ENCODE measurements at regions of chr2 and their contacts with region 1.

Region 1: DNA sequence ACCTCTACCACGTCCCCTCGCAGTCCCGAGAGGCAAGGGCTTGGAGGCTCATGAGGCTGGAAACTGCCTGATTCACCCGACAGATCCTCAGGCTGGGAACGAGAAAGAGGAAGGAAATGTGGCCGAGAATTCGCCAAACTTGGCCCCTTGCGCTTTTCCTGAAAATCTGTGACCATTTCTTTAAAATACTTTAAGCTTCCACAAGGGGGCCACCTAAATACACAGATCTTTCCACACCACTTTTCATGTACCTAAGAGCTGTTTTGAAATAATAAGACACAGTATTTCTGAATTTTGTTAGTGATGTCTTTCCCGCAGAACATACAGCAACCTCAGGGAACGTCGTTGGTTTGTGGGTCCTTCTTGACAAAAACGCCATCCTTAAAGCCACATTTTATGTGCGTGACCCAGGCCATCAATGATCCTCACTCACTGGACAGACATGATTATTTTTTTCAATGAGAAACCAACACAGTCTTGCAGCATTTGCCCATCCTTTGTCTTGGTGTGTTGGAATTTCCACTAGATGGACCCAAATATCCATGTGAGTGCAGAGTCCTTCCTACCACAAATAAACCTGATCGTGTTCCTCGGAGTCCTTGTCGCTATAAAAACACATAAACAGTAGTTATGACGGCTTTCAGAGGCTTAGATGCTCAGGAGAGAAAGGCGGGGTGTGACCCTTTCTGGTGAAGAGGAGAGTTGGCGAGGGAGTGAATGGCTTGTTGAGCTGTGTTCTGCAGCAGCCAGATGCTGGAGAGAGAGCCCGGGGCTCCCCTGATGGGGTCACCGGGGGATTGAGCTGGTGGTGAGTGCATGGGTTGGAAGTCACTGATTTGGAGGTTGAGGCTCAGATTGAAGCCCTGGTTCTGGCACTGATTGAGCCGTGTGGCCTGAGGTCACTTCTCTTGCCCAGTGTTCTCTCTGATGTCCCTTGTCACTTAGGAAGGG is 25.0 kb downstream of the DCDC2C start:
- DNase-seq: peak; percentile 62
- H3K4me3 Mint-ChIP-seq: no peak overlapping the region
- H3K27ac Mint-ChIP-seq: no peak overlapping the region
- H3K4me1 Mint-ChIP-seq: peaks cover 12% of the 10 kb centered on the region
- H3K27me3 Mint-ChIP-seq: peaks cover 43% of the 10 kb centered on the region
- CTCF ChIP-seq: peak; percentile 51

Region 2: DNA sequence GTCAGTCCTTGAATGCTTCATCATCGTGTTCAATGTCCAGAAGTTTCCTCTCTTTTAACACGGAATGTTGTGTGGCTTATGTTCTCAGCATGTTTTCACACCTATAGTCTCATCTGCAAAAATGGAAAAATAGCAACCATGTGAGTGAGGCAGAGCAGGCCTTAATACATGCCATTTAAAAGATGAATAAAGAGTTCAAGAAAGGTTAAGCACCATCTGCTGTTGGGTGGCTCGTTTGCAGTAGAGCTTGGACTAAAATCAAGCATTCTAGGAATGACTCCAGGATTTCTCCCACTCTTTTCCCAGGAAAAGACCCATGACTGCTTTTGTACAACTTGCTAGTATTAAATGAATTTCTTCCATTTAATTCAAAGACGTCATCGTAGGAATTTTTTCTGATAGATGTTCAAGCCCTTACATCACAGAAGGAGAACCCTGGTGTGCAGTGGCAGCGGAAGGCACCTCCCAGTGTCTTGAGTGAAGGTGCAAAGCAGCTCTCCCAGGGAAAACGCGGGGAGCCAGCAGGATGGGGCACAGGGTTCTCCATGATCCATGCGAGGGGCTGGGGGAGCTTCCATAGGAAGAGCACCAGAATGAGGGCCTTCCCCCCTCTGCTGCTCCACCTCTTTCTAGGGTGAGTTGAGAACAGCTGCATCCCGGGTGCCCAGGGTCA is 15.4 kb before region 1 on chr2:
- CTCF ChIA-PET with region 1: interaction called, 29 read pairs
- POLR2A ChIA-PET with region 1: no interaction called
- intact Hi-C with region 1: no loop called
- DNase-seq: no peak
- H3K4me3 Mint-ChIP-seq: no peak overlapping the region
- H3K27ac Mint-ChIP-seq: no peak overlapping the region
- H3K4me1 Mint-ChIP-seq: peaks cover 14% of the 10 kb centered on the region
- H3K27me3 Mint-ChIP-seq: no peaks in the 10 kb centered on the region
- CTCF ChIP-seq: no peak

Region 3: GRCh38 chr2:3759761-3760160 is 31.4 kb after region 1 on chr2:
- CTCF ChIA-PET with region 1: no interaction called
- POLR2A ChIA-PET with region 1: no interaction called
- intact Hi-C with region 1: no loop called
- DNase-seq: no peak
- H3K4me3 Mint-ChIP-seq: no peak overlapping the region
- H3K27ac Mint-ChIP-seq: no peak overlapping the region
- H3K4me1 Mint-ChIP-seq: peaks cover 12% of the 10 kb centered on the region
- H3K27me3 Mint-ChIP-seq: peaks cover 27% of the 10 kb centered on the region
- CTCF ChIP-seq: no peak

Region 4: DNA sequence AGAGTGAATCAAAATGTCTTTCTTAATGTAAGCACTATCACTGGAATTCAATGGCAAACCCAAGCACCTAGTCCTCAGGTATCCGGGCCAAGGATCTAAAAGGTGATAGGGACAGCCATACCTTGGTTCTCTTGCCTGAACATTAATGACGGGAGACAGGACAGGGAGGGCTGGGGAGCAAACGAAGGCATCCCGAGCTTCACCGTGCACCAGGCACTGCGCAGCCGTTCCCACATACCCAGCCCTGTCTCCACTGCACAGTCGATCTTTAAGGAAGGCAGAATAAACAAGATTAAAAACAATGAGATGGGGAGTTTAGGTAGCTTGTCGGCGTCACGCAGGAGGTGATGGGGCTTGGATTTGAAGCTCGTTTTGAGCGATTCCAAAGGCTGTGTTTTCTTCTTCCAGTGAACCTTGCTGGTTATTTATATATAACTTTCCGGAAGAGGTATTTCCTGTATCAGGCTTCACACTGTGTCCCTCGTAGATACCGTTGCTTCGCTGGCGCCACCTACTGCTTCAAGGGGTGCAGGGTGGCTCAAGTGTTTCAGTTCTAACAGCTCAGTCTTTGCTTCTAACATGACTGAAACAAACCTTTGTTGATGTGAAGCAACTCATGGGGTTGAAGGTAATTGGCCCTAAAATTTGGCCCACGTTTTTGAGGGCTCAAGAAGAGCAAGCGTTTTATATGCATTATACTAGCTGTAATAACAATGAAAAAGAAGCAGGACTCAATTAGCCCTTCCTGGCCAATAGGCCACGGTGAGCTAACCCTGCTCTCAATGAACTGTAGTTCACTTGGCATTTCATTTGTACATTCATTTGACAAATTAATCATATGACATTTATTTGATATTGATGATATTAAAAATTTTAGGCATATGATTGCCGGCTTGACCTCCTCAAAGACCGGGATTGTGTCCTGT is 52.4 kb after region 1 on chr2:
- CTCF ChIA-PET with region 1: interaction called, 32 read pairs
- POLR2A ChIA-PET with region 1: no interaction called
- intact Hi-C with region 1: no loop called
- DNase-seq: peak; percentile 78
- H3K4me3 Mint-ChIP-seq: no peak overlapping the region
- H3K27ac Mint-ChIP-seq: no peak overlapping the region
- H3K4me1 Mint-ChIP-seq: peaks cover 18% of the 10 kb centered on the region
- H3K27me3 Mint-ChIP-seq: peaks cover 31% of the 10 kb centered on the region
- CTCF ChIP-seq: peak; percentile 42

Region 5: GRCh38 chr2:3793249-3793648 is 64.9 kb after region 1 on chr2:
- CTCF ChIA-PET with region 1: no interaction called
- POLR2A ChIA-PET with region 1: no interaction called
- intact Hi-C with region 1: no loop called
- DNase-seq: no peak
- H3K4me3 Mint-ChIP-seq: no peak overlapping the region
- H3K27ac Mint-ChIP-seq: no peak overlapping the region
- H3K4me1 Mint-ChIP-seq: peaks cover 8% of the 10 kb centered on the region
- H3K27me3 Mint-ChIP-seq: no peaks in the 10 kb centered on the region
- CTCF ChIP-seq: no peak

Region 6: DNA sequence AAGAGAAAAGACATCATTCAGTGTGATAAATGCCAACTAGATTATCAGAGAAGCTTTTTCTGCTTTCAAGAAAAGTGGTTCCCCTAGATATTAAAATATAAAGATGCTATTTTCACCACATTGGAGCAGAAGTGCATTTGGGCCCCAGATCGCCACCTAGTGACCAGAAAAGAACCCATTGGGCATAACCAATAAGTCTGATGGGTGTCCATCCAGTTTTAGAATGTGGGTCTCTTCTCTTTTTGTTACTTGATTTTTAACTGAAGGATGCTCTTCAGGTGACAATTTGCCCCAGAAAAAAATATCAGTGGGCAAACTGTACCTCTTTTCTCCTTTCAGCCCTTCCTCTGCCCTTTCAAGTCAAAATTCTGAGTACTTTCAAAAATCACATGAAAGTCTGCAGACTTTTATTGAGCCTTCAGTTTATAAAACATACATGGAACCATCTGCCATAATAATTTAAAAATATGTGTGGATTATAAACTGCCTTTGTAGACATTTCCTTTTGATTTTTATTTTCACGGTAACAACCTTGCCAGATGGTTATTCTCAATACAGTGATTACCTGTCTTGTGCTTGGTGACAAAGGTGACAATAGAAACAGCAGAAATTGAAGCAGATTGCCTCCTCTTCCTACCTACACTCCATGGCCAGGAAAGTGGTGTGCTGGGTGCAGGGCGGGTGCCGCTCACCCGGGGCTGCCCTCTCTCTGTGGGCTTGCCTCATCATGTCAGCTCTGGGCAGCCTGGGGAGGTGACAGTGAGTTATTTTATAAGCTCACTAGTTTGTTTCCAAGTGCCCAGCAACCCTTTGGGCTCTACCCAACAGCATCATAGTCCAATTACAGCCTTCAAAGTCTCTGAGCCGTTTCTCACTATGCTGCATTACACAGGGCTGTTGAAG is 99.5 kb after region 1 on chr2:
- CTCF ChIA-PET with region 1: interaction called, 59 read pairs
- POLR2A ChIA-PET with region 1: interaction called, 6 read pairs
- intact Hi-C with region 1: loop called (anchors 2 kb)
- DNase-seq: peak; percentile 70
- H3K4me3 Mint-ChIP-seq: no peak overlapping the region
- H3K27ac Mint-ChIP-seq: no peak overlapping the region
- H3K4me1 Mint-ChIP-seq: peaks cover 23% of the 10 kb centered on the region
- H3K27me3 Mint-ChIP-seq: no peaks in the 10 kb centered on the region
- CTCF ChIP-seq: peak; percentile 55

Region 7: GRCh38 chr2:4053769-4054493 is 325.6 kb after region 1 on chr2:
- CTCF ChIA-PET with region 1: interaction called, 8 read pairs
- POLR2A ChIA-PET with region 1: interaction called, 3 read pairs
- intact Hi-C with region 1: loop called (anchors 2 kb)
- DNase-seq: peak; percentile 3
- H3K4me3 Mint-ChIP-seq: no peak overlapping the region
- H3K27ac Mint-ChIP-seq: no peak overlapping the region
- H3K4me1 Mint-ChIP-seq: peaks cover 7% of the 10 kb centered on the region
- H3K27me3 Mint-ChIP-seq: no peaks in the 10 kb centered on the region
- CTCF ChIP-seq: peak; percentile 32

Measured in MCF 10A (cell line).